ENCODE measurements at regions of chr6 and their contacts with region 1.

Region 1: GRCh38 chr6:36423101-36423824 is 19.4 kb downstream of the PXT1 start:
- DNase-seq: peak; percentile 99
- ATAC-seq: peak; percentile 87
- H3K4me3 ChIP-seq: peak overlapping the region; percentile 72
- H3K27ac ChIP-seq: peak overlapping the region; percentile 50
- H3K4me1 ChIP-seq: peaks cover 6% of the 10 kb centered on the region
- H3K27me3 ChIP-seq: no peaks in the 10 kb centered on the region
- CTCF ChIP-seq: peak; percentile 83

Region 2: GRCh38 chr6:36323067-36323466 is 100.2 kb before region 1 on chr6:
- CTCF ChIA-PET with region 1: no interaction called
- POLR2A ChIA-PET with region 1: no interaction called
- intact Hi-C with region 1: no loop called
- DNase-seq: peak; percentile 9
- ATAC-seq: no peak
- H3K4me3 ChIP-seq: no peak overlapping the region
- H3K27ac ChIP-seq: no peak overlapping the region
- H3K4me1 ChIP-seq: no peaks in the 10 kb centered on the region
- H3K27me3 ChIP-seq: 0 out of 2 replicates have a peak, but pooled peaks cover 5% of the 10 kb centered on the region
- CTCF ChIP-seq: no peak

Region 3: GRCh38 chr6:36442671-36443470 is 19.6 kb after region 1 on chr6 and contains the starts of genes KCTD20 and PXT1:
- CTCF ChIA-PET with region 1: interaction called, 4 read pairs
- POLR2A ChIA-PET with region 1: interaction called, 5 read pairs
- intact Hi-C with region 1: loop called (anchors 1 kb)
- DNase-seq: peak; percentile 91
- ATAC-seq: peak; percentile 73
- H3K4me3 ChIP-seq: peak within 1 kb of the TSS; percentile 97
- H3K27ac ChIP-seq: peak within 1 kb of the TSS; percentile 83
- H3K4me1 ChIP-seq: peaks cover 29% of the 10 kb centered on the region
- H3K27me3 ChIP-seq: no peaks in the 10 kb centered on the region
- CTCF ChIP-seq: no peak
- total RNA-seq, gene KCTD20: 20.8 and 26.5 TPM in 2 replicates
- total RNA-seq, gene PXT1: not detected in 2 replicates

Region 4: DNA sequence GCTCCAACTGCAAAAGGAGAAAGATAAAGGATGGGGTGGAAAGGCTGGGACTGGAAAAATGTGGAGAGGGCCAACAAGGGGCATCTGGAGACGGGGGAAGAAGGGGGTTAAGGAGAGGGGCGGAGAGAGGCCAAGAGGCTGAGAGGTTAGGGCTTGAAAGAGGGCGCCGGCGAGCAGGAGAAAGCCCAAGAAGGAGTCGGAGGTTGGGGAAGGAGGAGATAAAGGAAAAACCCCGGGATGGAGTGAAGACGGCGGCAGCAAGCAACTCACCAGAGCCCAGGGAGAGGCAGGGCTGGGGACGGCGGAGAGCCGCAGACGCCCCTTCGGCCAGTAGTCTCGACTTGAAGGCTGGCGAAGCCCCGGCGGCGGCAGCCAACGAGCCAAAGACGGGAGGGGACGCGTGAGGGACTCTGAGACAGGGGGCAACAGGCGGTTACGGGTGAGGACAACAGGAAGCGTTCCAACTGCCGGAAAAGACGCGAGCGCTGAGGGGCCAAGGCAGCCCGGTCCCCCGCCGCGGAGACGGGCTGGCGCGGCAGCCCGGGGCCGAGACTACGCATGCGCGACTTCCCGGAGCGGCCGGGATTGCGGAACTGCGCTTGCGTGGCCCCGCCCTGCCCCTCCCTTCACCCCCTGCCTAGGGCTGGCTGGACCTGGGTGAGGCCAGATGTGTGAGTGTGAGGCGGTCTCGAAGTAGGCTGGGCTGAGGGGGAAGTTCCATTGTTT is 123.8 kb after region 1 on chr6 and contains the start of gene STK38:
- CTCF ChIA-PET with region 1: no interaction called
- POLR2A ChIA-PET with region 1: no interaction called
- intact Hi-C with region 1: loop called (anchors 5 kb)
- DNase-seq: peak; percentile 89
- ATAC-seq: peak; percentile 91
- H3K4me3 ChIP-seq: peak within 1 kb of the TSS; percentile 94
- H3K27ac ChIP-seq: peak within 1 kb of the TSS; percentile 55
- H3K4me1 ChIP-seq: peaks cover 34% of the 10 kb centered on the region
- H3K27me3 ChIP-seq: no peaks in the 10 kb centered on the region
- CTCF ChIP-seq: peak; percentile 52
- total RNA-seq, gene STK38: 25.7 and 26.9 TPM in 2 replicates

Region 5: GRCh38 chr6:36666726-36667591 is 243.7 kb after region 1 on chr6:
- CTCF ChIA-PET with region 1: no interaction called
- POLR2A ChIA-PET with region 1: no interaction called
- intact Hi-C with region 1: no loop called
- DNase-seq: peak; percentile 47
- ATAC-seq: 0 out of 2 replicates have a peak, but pooled peaks have one; percentile 27
- H3K4me3 ChIP-seq: no peak overlapping the region
- H3K27ac ChIP-seq: no peak overlapping the region
- H3K4me1 ChIP-seq: peaks cover 11% of the 10 kb centered on the region
- H3K27me3 ChIP-seq: no peaks in the 10 kb centered on the region
- CTCF ChIP-seq: no peak

Region 6: GRCh38 chr6:36678518-36679027 is 255.3 kb after region 1 on chr6 and contains the start of gene CDKN1A:
- CTCF ChIA-PET with region 1: interaction called, 3 read pairs
- POLR2A ChIA-PET with region 1: no interaction called
- intact Hi-C with region 1: loop called (anchors 1 kb)
- DNase-seq: peak; percentile 92
- ATAC-seq: peak; percentile 74
- H3K4me3 ChIP-seq: peak within 1 kb of the TSS; percentile 76
- H3K27ac ChIP-seq: peak within 1 kb of the TSS; percentile 49
- H3K4me1 ChIP-seq: peaks cover 34% of the 10 kb centered on the region
- H3K27me3 ChIP-seq: no peaks in the 10 kb centered on the region
- CTCF ChIP-seq: no peak
- total RNA-seq, gene CDKN1A: 79.5 and 91.5 TPM in 2 replicates

Measured in PC-3 (cell line).